Prostate gland (tissue), 2 donors: ENCODE measurements at regions of chr17 and their contacts with region 1.

Region 1: GRCh38 chr17:29807520-29808351 is 122.3 kb downstream of the SSH2 start:
- DNase-seq: peak; percentile 48
- H3K4me3 ChIP-seq: no peak overlapping the region
- H3K27ac ChIP-seq: no peak overlapping the region
- H3K4me1 ChIP-seq: no peaks in the 10 kb centered on the region
- H3K27me3 ChIP-seq: no peaks in the 10 kb centered on the region
- CTCF ChIP-seq: peak; percentile 35 to 74 (median 59)
- POLR2A ChIP-seq: no peak

Region 2: GRCh38 chr17:29589524-29590410 is 218.0 kb before region 1 on chr17 and contains the start of gene GIT1:
- intact Hi-C with region 1: no loop called
- DNase-seq: peak; percentile 85
- H3K4me3 ChIP-seq: peak within 1 kb of the TSS; percentile 72 to 76
- H3K27ac ChIP-seq: peak within 1 kb of the TSS; percentile 77 to 79
- H3K4me1 ChIP-seq: peaks cover 24% of the 10 kb centered on the region
- H3K27me3 ChIP-seq: no peaks in the 10 kb centered on the region
- CTCF ChIP-seq: peak in 3 of 4 experiments; percentile 23 to 41 (median 34)
- POLR2A ChIP-seq: peak; percentile 52
- total RNA-seq, gene GIT1: 29.1 to 86.9 TPM

Region 3: GRCh38 chr17:29891131-29891530 is 83.4 kb after region 1 on chr17:
- intact Hi-C with region 1: no loop called
- DNase-seq: no peak
- H3K4me3 ChIP-seq: no peak overlapping the region
- H3K27ac ChIP-seq: no peak overlapping the region
- H3K4me1 ChIP-seq: no peaks in the 10 kb centered on the region
- H3K27me3 ChIP-seq: no peaks in the 10 kb centered on the region
- CTCF ChIP-seq: no peak
- POLR2A ChIP-seq: no peak

Region 4: DNA sequence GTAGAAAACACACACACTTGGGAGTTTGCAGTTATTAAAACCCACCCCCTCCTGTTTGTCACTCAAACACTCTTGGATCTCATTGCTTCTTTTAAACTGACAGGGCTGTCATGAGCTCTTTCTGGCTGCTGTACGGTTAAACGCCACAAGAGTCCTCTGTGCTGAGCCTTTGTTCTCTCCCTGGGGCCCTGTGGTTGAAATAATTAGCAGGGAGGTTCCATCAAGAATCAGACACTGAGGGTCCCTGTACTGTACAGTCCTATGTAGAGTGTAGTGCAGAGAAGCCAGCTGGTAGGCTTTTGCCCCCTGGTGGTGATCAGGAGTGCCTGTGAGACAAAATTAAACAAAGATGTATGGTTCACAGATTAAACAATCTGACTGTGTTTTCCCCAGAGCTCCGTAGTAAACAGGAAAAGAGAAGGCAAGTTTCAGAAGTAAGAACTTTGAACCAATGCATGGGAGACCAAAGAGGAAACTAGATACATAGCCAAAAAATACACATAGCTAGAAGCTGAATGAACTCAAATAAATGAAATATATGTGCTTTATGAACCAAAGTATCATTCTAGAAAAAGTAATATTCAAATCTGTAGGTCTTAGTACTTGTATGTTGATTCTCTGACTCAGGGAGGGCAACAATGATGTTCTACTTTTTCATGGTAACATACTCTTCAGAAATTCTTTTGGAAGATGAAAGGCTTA is 123.6 kb after region 1 on chr17:
- intact Hi-C with region 1: loop called (anchors 2 kb)
- DNase-seq: peak; percentile 68
- H3K4me3 ChIP-seq: peak overlapping the region in 1 of 2 donors; percentile 81
- H3K27ac ChIP-seq: no peak overlapping the region
- H3K4me1 ChIP-seq: peaks cover 3% of the 10 kb centered on the region
- H3K27me3 ChIP-seq: no peaks in the 10 kb centered on the region
- CTCF ChIP-seq: peak; percentile 70 to 88 (median 82)
- POLR2A ChIP-seq: no peak

Region 5: DNA sequence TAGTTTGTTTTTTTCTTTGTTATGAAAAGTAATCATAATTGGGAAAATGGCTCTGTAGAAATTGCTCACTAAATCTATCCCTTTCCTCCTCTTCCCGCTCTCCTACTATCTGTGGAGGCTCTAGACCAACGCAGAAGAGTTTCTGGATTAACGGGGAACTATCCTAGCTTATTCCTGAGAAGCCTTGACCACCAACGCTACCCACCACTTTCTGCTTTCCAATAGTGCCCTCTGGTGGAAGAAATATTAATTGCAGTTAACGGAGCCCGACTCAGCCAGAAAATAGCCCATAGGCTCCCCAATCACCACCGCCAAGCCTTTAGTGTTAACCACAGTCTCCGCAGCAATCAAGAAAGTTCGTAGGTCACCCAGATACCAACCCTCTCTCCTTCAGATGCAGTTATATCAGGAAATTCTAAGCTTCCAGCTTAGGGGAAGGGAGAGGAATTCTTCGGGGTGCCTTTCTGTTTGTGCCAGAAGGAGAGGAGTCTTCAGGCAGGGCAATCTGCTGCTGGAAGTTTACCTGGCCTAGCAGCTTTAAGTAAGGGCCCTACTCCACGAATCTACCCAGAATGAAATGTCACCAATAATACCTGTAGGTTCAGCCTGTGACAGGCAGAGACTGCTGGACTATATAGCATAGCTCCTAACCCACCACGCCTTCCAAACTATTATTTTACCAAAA is 285.9 kb after region 1 on chr17:
- intact Hi-C with region 1: loop called (anchors 10 kb)
- DNase-seq: peak; percentile 15
- H3K4me3 ChIP-seq: no peak overlapping the region
- H3K27ac ChIP-seq: no peak overlapping the region
- H3K4me1 ChIP-seq: no peaks in the 10 kb centered on the region
- H3K27me3 ChIP-seq: no peaks in the 10 kb centered on the region
- CTCF ChIP-seq: peak; percentile 41 to 75 (median 63)
- POLR2A ChIP-seq: no peak